Pancreas (tissue), 10 donors: ENCODE measurements at regions of chr9 and their contacts with region 1.

Region 1: DNA sequence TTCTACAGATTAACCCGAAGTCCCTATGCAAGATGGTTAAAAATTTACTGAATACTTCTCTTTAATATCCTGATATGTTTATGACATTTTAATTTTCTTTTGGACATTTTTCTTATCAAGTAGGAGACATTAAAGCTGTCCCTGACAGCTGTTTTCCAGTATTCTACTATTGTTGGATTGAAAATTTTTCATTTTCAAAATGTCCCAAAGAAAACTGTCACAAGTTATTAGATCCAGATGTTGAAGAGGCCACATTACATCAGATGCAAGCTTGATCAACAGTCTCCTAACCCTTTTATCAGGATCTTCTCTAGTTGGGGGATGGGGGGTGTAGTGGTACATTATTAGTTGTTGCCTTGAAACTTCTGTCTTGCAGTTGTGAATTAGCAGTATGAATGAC is 1402.7 kb upstream of the DMAC1 start:
- DNase-seq: no peak
- ATAC-seq: no peak
- H3K4me3 ChIP-seq: no peak overlapping the region
- H3K27ac ChIP-seq: no peak overlapping the region
- H3K4me1 ChIP-seq: no peaks in the 10 kb centered on the region
- H3K27me3 ChIP-seq: no peaks in the 10 kb centered on the region
- CTCF ChIP-seq: no peak

Region 2: GRCh38 chr9:9016597-9016996 is 185.7 kb before region 1 on chr9:
- intact Hi-C with region 1: loop called in 1 of 3 experiments (anchors 5 kb)
- DNase-seq: no peak
- ATAC-seq: no peak
- H3K4me3 ChIP-seq: no peak overlapping the region
- H3K27ac ChIP-seq: no peak overlapping the region
- H3K4me1 ChIP-seq: no peaks in the 10 kb centered on the region
- H3K27me3 ChIP-seq: no peaks in the 10 kb centered on the region
- CTCF ChIP-seq: no peak